Naive thymus-derived CD4-positive, alpha-beta T cell (primary cell): ENCODE measurements at regions of chr9 and their contacts with region 1.

Region 1: GRCh38 chr9:112647596-112647995 is 70.3 kb downstream of the INIP start:
- DNase-seq: no peak
- ATAC-seq: no peak
- H3K4me3 ChIP-seq: no peak overlapping the region
- H3K4me3 Mint-ChIP-seq: no peak overlapping the region
- H3K27ac ChIP-seq: no peak overlapping the region
- H3K27ac Mint-ChIP-seq: no peak overlapping the region
- H3K4me1 ChIP-seq: no peaks in the 10 kb centered on the region
- H3K4me1 Mint-ChIP-seq: no peaks in the 10 kb centered on the region
- H3K27me3 ChIP-seq: no peaks in the 10 kb centered on the region
- H3K27me3 Mint-ChIP-seq: peaks cover 0 to 4% (median 0%) of the 10 kb centered on the region in 5 donors

Region 2: DNA sequence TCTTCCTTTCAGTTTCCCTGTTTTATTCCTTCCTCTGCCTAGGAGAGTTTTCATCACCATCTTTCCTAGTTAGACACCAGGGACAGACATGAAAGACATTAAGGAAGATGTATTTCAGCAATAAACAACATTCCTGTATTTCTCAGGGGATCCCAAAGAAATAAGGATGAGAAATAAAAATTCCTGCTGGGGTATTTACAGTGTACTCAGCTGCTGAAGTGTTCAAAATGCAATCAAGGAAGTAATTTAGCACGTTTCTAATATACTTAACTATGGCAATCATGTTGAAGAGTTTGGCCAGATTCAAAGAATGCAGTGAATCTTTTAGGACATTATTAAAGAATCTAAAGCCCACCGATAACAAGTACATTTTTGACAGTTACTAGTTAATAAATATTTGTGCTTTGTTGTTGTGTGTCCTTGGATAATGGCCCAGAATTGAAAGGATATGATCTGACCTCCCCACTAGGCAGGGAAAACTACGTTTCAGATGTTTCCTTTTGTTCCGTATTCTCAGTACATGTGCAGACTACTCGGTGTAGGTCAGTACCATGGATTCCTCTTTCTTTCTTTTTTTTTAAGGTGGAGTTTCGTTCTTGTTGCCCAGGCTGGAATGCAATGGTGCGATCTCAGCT is 23.5 kb after region 1 on chr9:
- CTCF ChIA-PET with region 1: no interaction called
- POLR2A ChIA-PET with region 1: no interaction called
- intact Hi-C with region 1: loop called in 1 of 2 experiments (anchors 1 kb)
- DNase-seq: no peak
- ATAC-seq: no peak
- H3K4me3 ChIP-seq: no peak overlapping the region
- H3K4me3 Mint-ChIP-seq: no peak overlapping the region
- H3K27ac ChIP-seq: no peak overlapping the region
- H3K27ac Mint-ChIP-seq: no peak overlapping the region
- H3K4me1 ChIP-seq: no peaks in the 10 kb centered on the region
- H3K4me1 Mint-ChIP-seq: no peaks in the 10 kb centered on the region
- H3K27me3 ChIP-seq: no peaks in the 10 kb centered on the region
- H3K27me3 Mint-ChIP-seq: peaks cover 0 to 4% (median 0%) of the 10 kb centered on the region in 5 donors